Right ventricle myocardium inferior (tissue), 1 donor: ENCODE measurements at regions of chr16 and their contacts with region 1.

Region 1: DNA sequence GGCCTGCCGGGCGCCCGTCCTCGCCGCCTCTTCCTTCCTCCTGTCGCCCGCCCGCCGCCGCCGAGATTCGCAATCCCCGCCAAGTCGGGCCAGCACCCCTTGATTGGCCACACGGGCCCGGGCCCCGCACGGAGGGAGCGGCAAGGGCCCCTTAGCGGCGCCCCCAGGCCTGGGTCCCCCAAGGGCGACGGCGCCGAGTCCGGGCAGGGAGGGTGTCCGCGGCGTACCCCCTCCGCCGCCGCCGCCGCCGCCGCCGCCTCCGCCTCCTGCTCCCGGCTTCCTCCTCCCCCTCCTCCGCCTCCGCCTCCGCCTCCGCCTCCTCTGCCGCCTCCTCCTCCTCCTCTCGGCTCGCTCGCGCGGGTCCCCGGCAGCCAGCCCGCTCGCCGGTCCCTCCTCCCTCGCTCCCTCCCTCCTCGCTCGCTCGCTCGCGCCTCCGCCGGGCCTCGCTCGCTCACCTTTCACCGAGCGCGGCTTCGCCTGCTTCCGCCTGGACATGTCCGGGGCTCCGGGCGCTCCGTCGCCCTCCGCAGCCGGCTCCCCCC is 561 bp downstream of the ZNF423 start:
- DNase-seq: peak; percentile 92
- ATAC-seq: peak; percentile 84

Region 2: GRCh38 chr16:49491771-49492761 is 363.3 kb before region 1 on chr16:
- intact Hi-C with region 1: loop called (anchors 5 kb)
- DNase-seq: peak; percentile 74
- ATAC-seq: peak; percentile 67

Region 3: GRCh38 chr16:49592546-49593423 is 262.6 kb before region 1 on chr16:
- intact Hi-C with region 1: loop called (anchors 5 kb)
- DNase-seq: no peak
- ATAC-seq: no peak

Region 4: GRCh38 chr16:49701789-49702494 is 153.4 kb before region 1 on chr16:
- intact Hi-C with region 1: loop called (anchors 5 kb)
- DNase-seq: peak; percentile 87
- ATAC-seq: peak; percentile 80

Region 5: DNA sequence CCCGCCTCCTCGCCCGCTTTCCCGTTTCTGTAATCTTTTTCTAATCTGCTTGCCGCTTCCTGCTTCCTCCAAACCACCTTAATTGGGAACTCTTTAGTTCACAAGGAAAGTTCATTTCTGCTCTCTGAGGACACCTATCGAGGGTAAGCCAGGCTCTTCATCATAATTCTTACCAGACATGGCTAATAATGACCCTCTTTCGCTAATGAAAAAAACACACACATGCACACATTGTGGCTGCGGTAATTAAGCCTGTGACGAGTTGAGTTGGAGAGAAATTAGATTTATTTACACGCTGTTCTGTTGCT is 100.1 kb before region 1 on chr16:
- intact Hi-C with region 1: loop called (anchors 2 kb)
- DNase-seq: no peak
- ATAC-seq: peak; percentile 36

Region 6: GRCh38 chr16:49776085-49776595 is 79.2 kb before region 1 on chr16:
- intact Hi-C with region 1: loop called (anchors 2 kb)
- DNase-seq: peak; percentile 73
- ATAC-seq: peak; percentile 45

Region 7: DNA sequence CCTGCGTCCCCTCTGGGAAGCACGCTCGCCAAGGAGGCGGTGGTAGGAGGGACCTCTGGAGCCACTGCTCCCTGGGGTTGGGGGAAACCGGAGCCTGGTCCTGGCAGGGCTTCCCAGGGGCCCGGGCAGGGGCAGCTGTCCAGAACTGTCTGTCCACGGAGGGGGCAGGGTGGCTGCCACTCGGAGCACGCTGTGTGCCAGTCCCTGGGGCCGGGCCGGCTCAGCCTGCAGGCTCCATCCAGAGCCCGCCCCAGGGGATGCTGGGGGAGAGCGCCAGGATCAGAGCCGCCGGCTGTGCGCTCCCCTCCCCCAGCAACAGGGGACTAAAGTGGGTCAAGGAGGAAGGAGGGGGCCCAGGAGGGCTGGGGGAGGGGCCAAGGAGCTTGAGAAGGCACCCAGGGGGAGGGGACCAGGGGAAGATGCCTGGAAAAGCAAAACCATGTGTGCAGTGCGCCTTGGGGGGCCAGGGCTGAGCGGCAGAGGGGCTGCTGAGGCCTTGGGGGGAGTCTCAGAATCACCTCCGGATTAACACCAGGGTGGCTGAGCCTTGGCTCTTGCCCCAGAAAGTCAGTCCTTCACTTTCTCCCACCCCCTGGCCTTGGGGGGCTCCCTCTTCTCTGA is 20.7 kb before region 1 on chr16:
- intact Hi-C with region 1: loop called (anchors 2 kb)
- DNase-seq: peak; percentile 83
- ATAC-seq: peak; percentile 52

Region 8: DNA sequence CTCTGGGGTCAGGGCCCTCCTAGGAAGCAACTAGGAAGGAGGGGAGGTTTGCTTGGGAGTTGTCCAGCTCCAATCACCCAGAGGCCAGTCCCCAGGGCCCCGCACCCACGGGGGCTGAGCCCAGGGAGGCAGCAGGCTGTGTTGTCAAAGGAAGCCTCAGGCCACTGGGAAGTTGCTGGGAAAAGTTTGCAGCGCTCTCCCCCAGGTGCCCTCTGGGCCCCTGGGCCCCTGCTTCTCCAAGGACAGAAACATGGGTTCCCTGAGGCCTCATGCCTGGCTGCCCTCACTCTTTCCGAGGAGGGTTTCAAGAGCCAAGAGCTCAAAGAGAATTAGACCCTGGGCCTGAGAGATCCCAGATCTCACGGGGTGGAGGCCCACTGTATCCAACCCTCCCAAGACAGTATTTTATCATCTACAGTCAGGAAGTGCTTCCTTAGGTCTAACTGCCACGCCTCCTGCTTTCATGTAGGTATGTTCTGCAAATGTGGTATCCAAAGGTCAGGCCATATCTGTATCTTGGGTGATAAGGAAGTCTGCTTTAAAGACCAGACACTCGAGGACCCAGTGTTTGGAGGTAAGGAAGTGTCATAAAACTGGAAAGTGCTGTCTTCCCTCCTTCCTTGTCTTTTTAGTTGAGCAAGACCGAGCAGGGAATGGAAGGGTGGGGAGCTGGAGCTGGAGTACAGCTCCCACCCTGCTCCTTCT is 44.8 kb after region 1 on chr16:
- intact Hi-C with region 1: no loop called
- DNase-seq: peak; percentile 7
- ATAC-seq: no peak